B cell (primary cell): ENCODE measurements at regions of chr3 and their contacts with region 1.

Region 1: DNA sequence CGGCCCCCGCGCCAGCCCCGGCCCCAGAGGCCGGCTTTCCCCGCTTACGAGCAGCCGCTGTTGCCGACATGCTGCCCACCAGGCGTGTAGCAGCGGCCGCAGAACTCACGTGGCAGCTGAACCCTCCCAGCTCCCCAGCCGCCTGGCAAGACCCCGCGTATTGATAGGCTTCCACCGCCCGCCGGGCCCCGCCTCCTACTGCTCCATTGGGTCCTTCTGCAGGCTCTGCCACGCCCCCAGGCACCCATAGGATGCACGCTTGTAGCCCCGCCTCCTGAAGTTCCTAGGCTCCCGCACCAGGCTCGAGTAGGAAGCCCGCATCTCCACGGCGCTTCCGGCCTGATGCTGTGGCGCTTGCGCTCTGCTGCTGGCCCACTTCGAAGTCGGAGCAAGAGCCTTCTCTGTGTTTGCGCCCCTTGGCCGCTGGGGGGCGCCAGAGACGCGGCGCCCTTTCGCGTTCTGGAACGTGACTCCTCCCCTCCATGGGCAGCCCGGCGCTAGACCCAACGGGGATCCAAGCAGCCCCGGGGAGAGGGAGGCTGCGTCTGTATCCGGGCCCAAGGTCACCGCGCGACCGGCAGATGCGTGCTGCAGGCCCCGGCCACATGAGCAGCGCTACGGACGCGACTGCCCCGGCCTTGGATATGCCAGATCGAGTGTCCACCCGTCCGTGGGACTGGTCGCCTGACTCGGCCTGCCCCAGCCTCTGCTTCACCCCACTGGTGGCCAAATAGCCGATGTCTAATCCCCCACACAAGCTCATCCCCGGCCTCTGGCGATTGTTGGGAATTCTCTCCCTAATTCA is at the starts of genes PARP3 and RRP9:
- DNase-seq: peak; percentile 100
- ATAC-seq: peak; percentile 94
- H3K4me3 ChIP-seq: peak within 1 kb of the TSS; percentile 43 to 90 (median 88)
- H3K4me3 Mint-ChIP-seq: peak within 1 kb of the TSS; percentile 95
- H3K27ac ChIP-seq: peak within 1 kb of the TSS; percentile 72 to 74
- H3K27ac Mint-ChIP-seq: peak within 1 kb of the TSS; percentile 94
- H3K4me1 ChIP-seq: peaks cover 22 to 26% of the 10 kb centered on the region in 2 donors
- H3K4me1 Mint-ChIP-seq: peaks cover 36% of the 10 kb centered on the region
- H3K27me3 ChIP-seq: no peaks in the 10 kb centered on the region
- H3K27me3 Mint-ChIP-seq: no peaks in the 10 kb centered on the region
- CTCF ChIP-seq: peak; percentile 100
- total RNA-seq, gene PARP3: 17.3 and 17.7 TPM in 2 replicates
- total RNA-seq, gene RRP9: 16.7 and 16.9 TPM in 2 replicates

Region 2: GRCh38 chr3:51384726-51385473 is 557.1 kb before region 1 on chr3 and contains the start of gene MANF:
- CTCF ChIA-PET with region 1: no interaction called
- POLR2A ChIA-PET with region 1: interaction called, 3 read pairs
- intact Hi-C with region 1: loop called (anchors 5 kb)
- DNase-seq: peak; percentile 98
- ATAC-seq: peak; percentile 95
- H3K4me3 ChIP-seq: peak within 1 kb of the TSS; percentile 74 to 97 (median 87)
- H3K4me3 Mint-ChIP-seq: peak within 1 kb of the TSS; percentile 99
- H3K27ac ChIP-seq: peak within 1 kb of the TSS; percentile 82 to 95
- H3K27ac Mint-ChIP-seq: peak within 1 kb of the TSS; percentile 99
- H3K4me1 ChIP-seq: peaks cover 21 to 33% of the 10 kb centered on the region in 2 donors
- H3K4me1 Mint-ChIP-seq: peaks cover 42% of the 10 kb centered on the region
- H3K27me3 ChIP-seq: no peaks in the 10 kb centered on the region
- H3K27me3 Mint-ChIP-seq: no peaks in the 10 kb centered on the region
- CTCF ChIP-seq: no peak
- total RNA-seq, gene MANF: 28.4 and 29.7 TPM in 2 replicates

Region 3: GRCh38 chr3:51669241-51670052 is 272.6 kb before region 1 on chr3:
- CTCF ChIA-PET with region 1: no interaction called
- POLR2A ChIA-PET with region 1: no interaction called
- intact Hi-C with region 1: no loop called
- DNase-seq: peak; percentile 79
- ATAC-seq: no peak
- H3K4me3 ChIP-seq: no peak overlapping the region
- H3K4me3 Mint-ChIP-seq: peak overlapping the region; percentile 91
- H3K27ac ChIP-seq: no peak overlapping the region
- H3K27ac Mint-ChIP-seq: peak overlapping the region; percentile 88
- H3K4me1 ChIP-seq: peaks cover 25 to 42% of the 10 kb centered on the region in 2 donors
- H3K4me1 Mint-ChIP-seq: peaks cover 44% of the 10 kb centered on the region
- H3K27me3 ChIP-seq: no peaks in the 10 kb centered on the region
- H3K27me3 Mint-ChIP-seq: no peaks in the 10 kb centered on the region
- CTCF ChIP-seq: peak; percentile 94

Region 4: DNA sequence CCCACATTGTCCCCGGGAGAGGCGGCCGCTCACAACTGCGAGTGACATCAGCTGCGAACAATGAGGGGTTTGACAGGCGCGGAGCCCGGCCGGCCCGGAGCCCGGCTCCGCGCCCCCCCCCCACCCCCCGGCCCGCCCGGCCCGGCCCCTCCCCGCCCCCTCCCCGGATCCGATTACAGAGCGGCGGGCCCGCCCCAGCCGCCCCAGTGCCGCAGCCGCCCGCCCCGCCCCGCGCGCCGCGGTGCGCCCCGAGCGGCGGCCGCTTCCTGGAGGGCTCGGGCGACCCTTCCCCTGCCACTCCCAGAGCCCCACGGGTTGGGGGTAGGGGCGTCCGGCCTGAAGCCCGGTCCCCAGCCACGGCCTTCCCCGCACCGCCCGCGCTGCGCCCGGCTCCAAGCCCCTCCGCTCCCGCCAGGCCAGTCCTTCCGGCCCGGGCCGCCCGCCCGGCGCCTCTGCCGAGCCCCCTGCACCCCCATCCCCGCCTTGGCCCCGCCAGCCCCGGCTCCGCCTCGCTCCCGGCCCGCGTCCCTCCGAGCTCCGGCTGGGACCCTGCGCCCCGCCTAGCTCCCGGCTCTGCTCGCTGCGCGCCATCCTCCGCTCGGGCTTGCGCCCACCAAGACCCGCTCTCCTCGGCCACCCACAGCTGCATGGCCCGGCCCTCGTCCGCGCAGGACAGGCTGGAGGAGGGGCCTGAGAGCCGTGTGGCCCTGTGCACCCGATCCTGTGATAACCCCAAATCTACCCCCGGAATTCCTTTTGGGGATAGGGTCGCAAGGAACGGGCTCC is 25.6 kb after region 1 on chr3 and contains the start of gene PCBP4:
- CTCF ChIA-PET with region 1: interaction called, 45 read pairs
- POLR2A ChIA-PET with region 1: interaction called, 3 read pairs
- intact Hi-C with region 1: no loop called
- DNase-seq: peak; percentile 54
- ATAC-seq: peak; percentile 72
- H3K4me3 ChIP-seq: peak within 1 kb of the TSS in 4 of 5 experiments; percentile 37 to 74 (median 55)
- H3K4me3 Mint-ChIP-seq: peak within 1 kb of the TSS; percentile 88
- H3K27ac ChIP-seq: peak within 1 kb of the TSS in 1 of 2 donors; percentile 56
- H3K27ac Mint-ChIP-seq: peak within 1 kb of the TSS; percentile 83
- H3K4me1 ChIP-seq: peaks cover 6 to 20% of the 10 kb centered on the region in 2 donors
- H3K4me1 Mint-ChIP-seq: peaks cover 23% of the 10 kb centered on the region
- H3K27me3 ChIP-seq: no peaks in the 10 kb centered on the region
- H3K27me3 Mint-ChIP-seq: no peaks in the 10 kb centered on the region
- CTCF ChIP-seq: no peak
- total RNA-seq, gene PCBP4: 15.3 TPM in 2 replicates

Region 5: DNA sequence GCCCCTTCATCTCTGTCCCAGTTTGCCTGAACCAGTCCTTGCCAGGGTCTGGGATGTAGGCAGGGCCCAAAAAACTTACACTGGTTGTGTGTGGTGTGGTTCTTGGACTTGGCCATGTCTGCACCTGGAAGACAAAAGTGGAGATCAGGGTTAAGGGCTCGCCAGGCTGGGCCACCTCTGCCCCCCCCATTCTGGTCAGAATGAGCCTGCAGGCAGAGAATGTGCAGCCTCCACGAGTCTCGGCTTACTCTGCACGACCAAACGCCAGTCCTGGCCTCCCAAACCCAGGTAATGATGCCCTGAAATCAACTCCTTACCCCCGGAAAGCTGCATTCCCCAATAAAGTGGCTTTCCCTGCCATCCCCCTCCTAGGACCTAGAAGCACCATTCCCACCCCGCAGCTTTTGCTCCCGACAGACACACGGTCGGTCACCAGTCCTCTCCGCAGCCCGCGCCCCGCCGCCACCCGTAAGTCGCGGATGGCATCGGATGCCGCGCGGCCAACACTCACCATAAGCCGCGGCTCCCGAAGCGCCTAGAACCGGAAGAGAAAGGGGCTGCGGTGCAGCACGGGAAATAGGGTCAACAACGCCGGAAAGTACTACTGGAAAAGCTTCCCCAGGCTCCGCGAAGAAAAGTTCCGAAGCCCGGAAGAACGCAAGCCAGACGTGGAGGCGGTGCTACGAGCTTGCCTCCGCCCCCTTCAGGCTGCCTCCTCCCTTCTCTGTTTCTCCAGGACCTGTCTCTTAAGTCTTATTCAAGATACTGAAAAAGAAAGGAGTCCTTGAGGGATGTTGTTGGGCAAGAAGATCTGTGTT is 53.6 kb after region 1 on chr3 and contains the start of gene RPL29:
- CTCF ChIA-PET with region 1: interaction called, 5 read pairs
- POLR2A ChIA-PET with region 1: interaction called, 6 read pairs
- intact Hi-C with region 1: loop called (anchors 1 kb)
- DNase-seq: peak; percentile 95
- ATAC-seq: peak; percentile 98
- H3K4me3 ChIP-seq: peak within 1 kb of the TSS; percentile 89 to 99 (median 94)
- H3K4me3 Mint-ChIP-seq: peak within 1 kb of the TSS; percentile 100
- H3K27ac ChIP-seq: peak within 1 kb of the TSS; percentile 87 to 91
- H3K27ac Mint-ChIP-seq: peak within 1 kb of the TSS; percentile 100
- H3K4me1 ChIP-seq: peaks cover 13 to 19% of the 10 kb centered on the region in 2 donors
- H3K4me1 Mint-ChIP-seq: peaks cover 33% of the 10 kb centered on the region
- H3K27me3 ChIP-seq: no peaks in the 10 kb centered on the region
- H3K27me3 Mint-ChIP-seq: peaks cover 6% of the 10 kb centered on the region
- CTCF ChIP-seq: no peak
- total RNA-seq, gene RPL29: 1,460 and 1,552 TPM in 2 replicates

Region 6: GRCh38 chr3:52144034-52144795 is 202.2 kb after region 1 on chr3:
- CTCF ChIA-PET with region 1: interaction called, 6 read pairs
- POLR2A ChIA-PET with region 1: no interaction called
- intact Hi-C with region 1: loop called (anchors 1 kb)
- DNase-seq: peak; percentile 89
- ATAC-seq: peak; percentile 99
- H3K4me3 ChIP-seq: no peak overlapping the region
- H3K4me3 Mint-ChIP-seq: no peak overlapping the region
- H3K27ac ChIP-seq: no peak overlapping the region
- H3K27ac Mint-ChIP-seq: no peak overlapping the region
- H3K4me1 ChIP-seq: peaks cover 4 to 5% of the 10 kb centered on the region in 2 donors
- H3K4me1 Mint-ChIP-seq: peaks cover 5% of the 10 kb centered on the region
- H3K27me3 ChIP-seq: no peaks in the 10 kb centered on the region
- H3K27me3 Mint-ChIP-seq: no peaks in the 10 kb centered on the region
- CTCF ChIP-seq: peak; percentile 93

Region 7: GRCh38 chr3:52197842-52198668 is 256.1 kb after region 1 on chr3 and contains the start of gene ALAS1:
- CTCF ChIA-PET with region 1: interaction called, 5 read pairs
- POLR2A ChIA-PET with region 1: no interaction called
- intact Hi-C with region 1: loop called (anchors 1 kb)
- DNase-seq: peak; percentile 96
- ATAC-seq: peak; percentile 96
- H3K4me3 ChIP-seq: peak within 1 kb of the TSS; percentile 9 to 90 (median 86)
- H3K4me3 Mint-ChIP-seq: peak within 1 kb of the TSS; percentile 92
- H3K27ac ChIP-seq: peak within 1 kb of the TSS; percentile 41 to 79
- H3K27ac Mint-ChIP-seq: peak within 1 kb of the TSS; percentile 90
- H3K4me1 ChIP-seq: peaks cover 19 to 33% of the 10 kb centered on the region in 2 donors
- H3K4me1 Mint-ChIP-seq: peaks cover 42% of the 10 kb centered on the region
- H3K27me3 ChIP-seq: no peaks in the 10 kb centered on the region
- H3K27me3 Mint-ChIP-seq: no peaks in the 10 kb centered on the region
- CTCF ChIP-seq: no peak
- total RNA-seq, gene ALAS1: 26.1 and 28.3 TPM in 2 replicates